ENCODE measurements at regions of chr15 and their contacts with region 1.

Region 1: GRCh38 chr15:65954289-65954741 is 85.0 kb downstream of the RAB11A start:
- DNase-seq: no peak
- H3K4me3 ChIP-seq: no peak overlapping the region
- H3K27ac ChIP-seq: no peak overlapping the region
- H3K4me1 ChIP-seq: no peaks in the 10 kb centered on the region
- H3K27me3 ChIP-seq: peaks cover 0 to 14% (median 0%) of the 10 kb centered on the region in 7 donors
- CTCF ChIP-seq: no peak
- POLR2A ChIP-seq: no peak

Region 2: GRCh38 chr15:65991721-65992483 is 37.6 kb after region 1 on chr15:
- intact Hi-C with region 1: loop called (anchors 2 kb)
- DNase-seq: no peak
- H3K4me3 ChIP-seq: no peak overlapping the region
- H3K27ac ChIP-seq: no peak overlapping the region
- H3K4me1 ChIP-seq: no peaks in the 10 kb centered on the region
- H3K27me3 ChIP-seq: peaks cover 0 to 86% (median 12%) of the 10 kb centered on the region in 7 donors
- CTCF ChIP-seq: no peak
- POLR2A ChIP-seq: no peak

Region 3: GRCh38 chr15:66188464-66188863 is 234.1 kb after region 1 on chr15:
- intact Hi-C with region 1: no loop called
- DNase-seq: no peak
- H3K4me3 ChIP-seq: no peak overlapping the region
- H3K27ac ChIP-seq: no peak overlapping the region
- H3K4me1 ChIP-seq: peaks cover 0 to 4% (median 0%) of the 10 kb centered on the region in 6 donors
- H3K27me3 ChIP-seq: peaks cover 0 to 28% (median 3%) of the 10 kb centered on the region in 7 donors
- CTCF ChIP-seq: no peak
- POLR2A ChIP-seq: no peak

Measured in spleen (tissue), 13 donors.